ENCODE measurements at regions of chr22 and their contacts with region 1.

Region 1: GRCh38 chr22:38124236-38124974 is 13.9 kb upstream of the BAIAP2L2 start:
- DNase-seq: no peak
- ATAC-seq: no peak

Region 2: GRCh38 chr22:37957232-37957631 is 167.2 kb before region 1 on chr22:
- intact Hi-C with region 1: no loop called
- DNase-seq: no peak
- ATAC-seq: no peak

Region 3: GRCh38 chr22:38017272-38017920 is 107.0 kb before region 1 on chr22:
- intact Hi-C with region 1: no loop called
- DNase-seq: peak; percentile 79 to 81
- ATAC-seq: peak; percentile 78

Region 4: GRCh38 chr22:38062791-38063190 is 61.6 kb before region 1 on chr22:
- intact Hi-C with region 1: no loop called
- DNase-seq: no peak
- ATAC-seq: no peak

Region 5: DNA sequence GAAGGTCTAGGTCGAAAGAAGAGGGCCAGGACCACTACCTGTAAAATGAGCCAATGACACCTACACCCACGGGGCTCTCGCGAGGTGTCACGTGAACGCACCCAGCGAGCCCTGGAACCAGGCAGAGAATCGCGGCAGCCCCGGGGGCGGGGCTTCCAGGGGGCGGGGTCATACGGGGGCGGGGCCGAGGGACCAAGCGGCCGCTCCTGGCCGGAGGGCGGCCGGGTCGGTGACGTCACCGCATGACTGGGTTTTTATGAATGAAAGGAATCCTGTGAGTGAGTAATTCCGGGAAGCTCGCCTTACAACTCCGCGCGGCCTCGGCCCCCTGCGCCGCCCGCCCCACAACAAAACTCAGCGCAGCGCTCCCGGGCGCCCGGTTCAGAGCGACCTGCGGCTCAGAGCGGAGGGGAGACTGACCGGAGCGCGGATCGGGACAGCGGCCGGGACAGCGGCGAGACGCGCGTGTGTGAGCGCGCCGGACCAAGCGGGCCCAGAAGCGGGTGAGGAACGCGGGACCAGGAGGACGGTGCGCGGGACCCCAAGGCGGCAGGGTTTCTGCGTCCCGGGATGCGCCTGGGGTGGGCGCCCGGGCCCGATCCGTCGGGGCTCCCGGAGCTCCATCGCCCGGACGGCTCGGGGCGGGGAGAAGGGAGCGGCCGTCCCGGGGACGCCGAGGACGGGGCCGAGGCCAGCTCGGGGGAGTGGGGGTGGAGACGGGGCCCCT is 77.5 kb after region 1 on chr22 and contains the start of gene MAFF:
- intact Hi-C with region 1: no loop called
- DNase-seq: peak; percentile 97 to 98
- ATAC-seq: peak; percentile 76
- total RNA-seq, gene MAFF: 18.0 to 22.2 TPM

Region 6: DNA sequence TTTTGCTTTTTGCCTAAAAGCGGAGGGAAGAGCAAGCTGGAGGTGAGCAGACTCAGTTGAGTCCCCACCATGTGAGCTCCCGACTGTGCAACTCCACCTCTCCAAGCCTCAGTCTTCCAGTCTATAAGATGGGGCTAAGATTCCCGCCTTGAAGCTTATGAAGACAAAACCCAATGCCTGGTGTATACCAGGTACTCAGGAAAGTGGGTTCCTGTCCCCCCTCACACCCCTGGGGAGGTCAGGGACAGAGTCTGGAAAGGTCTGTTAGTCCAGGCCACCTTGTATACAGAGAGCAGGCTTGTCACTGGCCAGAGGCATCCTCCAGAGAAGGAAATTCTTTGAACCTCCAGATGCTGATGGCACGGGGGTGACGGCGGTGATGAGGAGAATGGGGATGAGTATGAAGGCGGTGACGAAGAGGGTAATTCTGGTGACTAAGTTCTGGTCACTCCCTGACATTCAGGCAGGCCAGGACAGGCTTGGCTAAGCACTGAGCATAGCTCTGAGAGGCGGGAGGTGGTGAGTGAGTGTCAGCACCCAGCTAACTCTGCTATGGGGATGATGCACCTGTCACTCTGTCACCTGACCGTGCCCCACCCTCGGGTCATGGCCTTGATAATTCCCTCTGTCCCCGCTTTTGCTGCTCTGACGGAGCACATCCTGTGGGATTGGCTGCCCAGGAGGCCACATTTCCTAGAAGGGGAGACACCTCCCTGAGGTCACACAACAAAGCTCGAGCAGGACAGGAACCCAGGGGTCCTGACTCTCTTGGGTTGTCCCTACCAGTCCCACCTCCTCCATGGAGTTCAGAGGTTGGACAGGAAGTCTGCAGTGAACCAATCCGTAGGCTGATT is 223.7 kb after region 1 on chr22:
- intact Hi-C with region 1: loop called in 1 of 2 experiments (anchors 10 kb)
- DNase-seq: no peak
- ATAC-seq: peak; percentile 62